Heart right ventricle (tissue), 16 donors: ENCODE measurements at regions of chr4 and their contacts with region 1.

Region 1: DNA sequence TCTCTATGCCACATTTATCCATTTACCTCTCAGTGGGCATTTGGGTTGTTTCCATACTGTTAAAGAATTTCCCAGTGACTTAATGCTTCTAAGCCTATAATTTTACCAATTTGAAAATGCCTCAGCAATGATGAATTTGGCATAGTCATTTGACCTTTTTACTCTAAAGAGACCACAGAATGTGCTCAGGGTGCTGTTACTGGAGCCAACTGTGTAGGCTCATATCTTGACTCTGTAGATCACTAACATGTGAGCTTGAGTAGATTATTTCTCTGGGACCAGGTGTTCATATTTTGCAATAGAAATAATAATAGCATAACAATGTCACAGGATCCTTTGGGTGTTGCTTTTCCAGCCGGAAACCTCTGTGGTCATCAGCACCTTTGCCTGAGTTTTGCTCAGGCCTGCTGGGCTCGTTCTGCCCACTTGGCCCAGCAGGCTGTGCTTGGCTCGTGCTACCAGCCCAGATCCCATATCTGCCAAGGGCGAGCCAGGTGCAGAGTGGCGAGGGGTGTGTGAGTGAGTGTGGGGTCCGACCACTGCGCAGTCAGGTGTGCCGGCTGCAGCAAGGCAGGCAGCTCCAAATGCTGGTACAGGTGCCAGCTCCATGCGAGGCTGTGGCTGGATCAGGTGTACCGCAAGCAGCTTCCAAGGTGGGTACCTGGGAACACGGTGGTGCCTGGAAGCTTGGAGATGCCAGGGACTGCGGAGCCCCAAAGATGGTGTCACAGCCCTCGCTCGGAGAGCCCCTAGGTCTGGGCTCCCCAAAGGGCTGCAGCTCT is 70.6 kb upstream of the ANK2 start:
- DNase-seq: no peak
- ATAC-seq: no peak
- H3K4me3 ChIP-seq: no peak overlapping the region
- H3K27ac ChIP-seq: no peak overlapping the region
- H3K4me1 ChIP-seq: peaks cover 0 to 4% (median 0%) of the 10 kb centered on the region in 9 donors
- H3K27me3 ChIP-seq: no peaks in the 10 kb centered on the region
- CTCF ChIP-seq: no peak

Region 2: GRCh38 chr4:113080050-113080449 is 101.2 kb after region 1 on chr4:
- intact Hi-C with region 1: loop called in 1 of 10 experiments (anchors 10 kb)
- DNase-seq: no peak
- ATAC-seq: no peak
- H3K4me3 ChIP-seq: no peak overlapping the region
- H3K27ac ChIP-seq: no peak overlapping the region
- H3K4me1 ChIP-seq: no peaks in the 10 kb centered on the region
- H3K27me3 ChIP-seq: no peaks in the 10 kb centered on the region
- CTCF ChIP-seq: no peak

Region 3: GRCh38 chr4:113094802-113095201 is 115.9 kb after region 1 on chr4:
- intact Hi-C with region 1: loop called in 1 of 10 experiments (anchors 10 kb)
- DNase-seq: no peak
- ATAC-seq: no peak
- H3K4me3 ChIP-seq: no peak overlapping the region
- H3K27ac ChIP-seq: no peak overlapping the region
- H3K4me1 ChIP-seq: no peaks in the 10 kb centered on the region
- H3K27me3 ChIP-seq: no peaks in the 10 kb centered on the region
- CTCF ChIP-seq: peak; percentile 28 to 72 (median 56)